ENCODE measurements at regions of chr5 and their contacts with region 1.

Region 1: GRCh38 chr5:107673368-107674136 is 2.8 kb upstream of the EFNA5 start:
- DNase-seq: peak in 1 of 2 donors; percentile 92
- H3K4me3 ChIP-seq: peak overlapping the region; percentile 56 to 78
- H3K27ac ChIP-seq: peak overlapping the region; percentile 82 to 89
- H3K4me1 ChIP-seq: no peaks in the 10 kb centered on the region
- H3K27me3 ChIP-seq: no peaks in the 10 kb centered on the region
- CTCF ChIP-seq: peak; percentile 88 to 96 (median 94)

Region 2: DNA sequence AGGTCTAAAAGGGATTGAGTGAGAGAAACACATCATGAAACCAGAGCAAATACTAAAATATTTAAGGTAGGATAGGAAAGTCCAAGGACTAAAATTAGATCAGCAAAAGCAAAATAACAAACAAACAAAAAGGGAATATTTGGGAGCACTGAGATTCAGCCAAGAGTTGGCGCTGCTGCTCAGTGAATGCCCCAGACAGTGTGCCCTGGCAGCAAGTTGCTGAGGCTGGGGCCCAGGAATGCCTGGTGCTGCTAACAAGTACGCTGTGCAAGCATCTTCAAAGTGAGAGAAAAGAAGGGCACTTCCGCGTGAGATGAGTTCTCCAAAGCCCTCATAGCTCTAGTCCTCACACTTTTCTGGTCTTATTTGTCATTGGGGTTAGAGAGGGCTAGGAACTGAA is 606.2 kb before region 1 on chr5:
- intact Hi-C with region 1: loop called (anchors 5 kb)
- DNase-seq: no peak
- H3K4me3 ChIP-seq: no peak overlapping the region
- H3K27ac ChIP-seq: peak overlapping the region in 1 of 2 donors; percentile 45
- H3K4me1 ChIP-seq: no peaks in the 10 kb centered on the region
- H3K27me3 ChIP-seq: no peaks in the 10 kb centered on the region
- CTCF ChIP-seq: peak in 2 of 3 experiments; percentile 27 to 42

Region 3: GRCh38 chr5:107217721-107218130 is 455.8 kb before region 1 on chr5:
- intact Hi-C with region 1: loop called (anchors 1 kb)
- DNase-seq: peak; percentile 70 to 92
- H3K4me3 ChIP-seq: no peak overlapping the region
- H3K27ac ChIP-seq: peak overlapping the region; percentile 76 to 86
- H3K4me1 ChIP-seq: peaks cover 0 to 9% of the 10 kb centered on the region in 2 donors
- H3K27me3 ChIP-seq: no peaks in the 10 kb centered on the region
- CTCF ChIP-seq: no peak

Region 4: DNA sequence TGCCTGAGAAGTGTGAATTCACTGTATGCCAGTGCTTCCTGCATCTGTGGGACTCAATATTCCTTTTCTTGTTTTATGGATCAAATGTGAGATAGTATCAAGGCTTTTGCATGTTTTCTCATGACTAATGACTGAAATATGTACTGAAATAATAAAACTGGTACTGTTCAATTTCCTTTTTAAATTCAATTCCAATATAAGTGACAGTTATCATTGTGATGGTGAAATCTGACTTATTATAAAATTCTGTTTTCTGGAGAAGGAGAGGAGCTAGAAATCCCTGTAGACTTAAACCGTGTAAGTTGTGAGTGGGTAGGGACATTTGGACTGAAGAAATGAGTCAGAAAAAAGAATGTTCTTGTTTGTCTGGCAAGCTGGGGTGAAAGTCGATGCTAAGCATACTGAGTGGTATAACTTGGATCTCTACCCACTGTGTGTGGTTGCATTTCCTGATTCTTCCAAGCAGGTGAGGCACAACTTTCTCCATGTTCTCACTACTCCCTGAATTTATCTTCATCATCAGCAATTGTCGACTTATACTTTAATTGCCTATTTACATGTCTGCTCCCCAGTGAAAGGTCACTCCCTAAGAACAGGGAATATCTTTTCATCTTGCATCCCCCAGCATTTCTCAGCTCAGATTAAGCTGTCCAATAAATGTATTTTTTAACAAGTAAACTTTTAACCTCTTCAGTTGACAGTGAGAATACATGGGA is 247.9 kb before region 1 on chr5:
- intact Hi-C with region 1: loop called (anchors 5 kb)
- DNase-seq: no peak
- H3K4me3 ChIP-seq: no peak overlapping the region
- H3K27ac ChIP-seq: peak overlapping the region; percentile 46 to 58
- H3K4me1 ChIP-seq: peaks cover 2 to 30% of the 10 kb centered on the region in 2 donors
- H3K27me3 ChIP-seq: no peaks in the 10 kb centered on the region
- CTCF ChIP-seq: no peak

Region 5: DNA sequence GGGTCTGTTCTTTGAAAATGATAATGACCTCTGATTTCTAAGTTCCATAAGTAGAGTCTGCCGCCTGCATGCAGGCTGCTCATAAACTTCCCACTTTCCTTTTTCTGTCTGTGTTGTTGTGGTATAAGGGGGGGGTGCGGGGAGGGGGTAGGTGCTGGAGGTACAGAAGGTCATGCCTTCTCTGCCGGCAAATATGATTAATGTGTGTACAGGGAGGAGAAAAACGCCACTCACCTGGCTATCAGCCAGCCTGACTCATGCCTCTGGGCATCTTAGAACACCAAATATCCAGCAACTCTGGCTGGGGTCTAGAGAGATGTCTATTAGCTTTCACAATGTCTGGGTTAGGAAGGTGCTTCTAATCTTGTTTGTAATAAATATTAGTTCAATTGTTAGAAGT is 131.1 kb before region 1 on chr5:
- intact Hi-C with region 1: loop called (anchors 1 kb)
- DNase-seq: peak; percentile 47 to 95
- H3K4me3 ChIP-seq: peak overlapping the region; percentile 3 to 49
- H3K27ac ChIP-seq: peak overlapping the region; percentile 54 to 62
- H3K4me1 ChIP-seq: peaks cover 0 to 24% of the 10 kb centered on the region in 2 donors
- H3K27me3 ChIP-seq: no peaks in the 10 kb centered on the region
- CTCF ChIP-seq: no peak

Region 6: DNA sequence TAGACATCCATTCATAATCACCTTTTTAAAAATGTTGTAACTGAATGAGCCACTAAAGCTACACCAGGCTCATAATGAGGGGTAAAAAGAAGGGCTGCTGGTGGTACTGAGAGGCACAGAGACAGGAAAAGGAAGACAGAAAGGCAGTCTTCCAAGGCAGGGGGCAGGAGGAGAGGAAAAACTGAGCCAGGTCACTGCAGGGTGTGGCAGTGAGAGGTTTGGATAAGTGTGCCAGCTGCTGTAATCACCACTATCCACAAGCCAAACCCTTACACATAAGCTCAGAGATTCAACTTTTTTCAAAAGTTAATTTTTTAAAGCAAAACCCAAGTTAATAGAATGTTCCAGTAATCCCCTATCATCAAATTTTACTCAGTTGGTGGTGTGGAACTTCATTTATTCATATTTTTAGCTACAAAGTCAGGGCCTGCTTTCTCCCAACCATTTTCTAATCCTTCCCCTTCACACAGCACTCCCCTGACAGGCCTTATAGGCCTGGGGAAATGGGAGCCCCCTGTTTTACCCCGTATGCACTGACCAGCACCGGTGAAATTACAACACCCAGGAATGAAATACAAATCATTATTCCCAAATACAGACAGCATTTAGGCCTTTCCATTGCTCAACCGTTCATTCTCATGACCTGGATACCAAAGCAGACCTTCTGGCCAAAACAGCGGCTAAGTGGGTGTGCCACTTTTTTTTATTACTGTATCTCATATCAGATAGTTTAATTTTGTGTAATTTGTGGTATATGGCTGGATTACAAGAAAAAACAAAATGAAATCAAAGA is 79.1 kb before region 1 on chr5:
- intact Hi-C with region 1: loop called (anchors 5 kb)
- DNase-seq: no peak
- H3K4me3 ChIP-seq: no peak overlapping the region
- H3K27ac ChIP-seq: peak overlapping the region; percentile 50 to 73
- H3K4me1 ChIP-seq: peaks cover 0 to 7% of the 10 kb centered on the region in 2 donors
- H3K27me3 ChIP-seq: no peaks in the 10 kb centered on the region
- CTCF ChIP-seq: no peak

Region 7: DNA sequence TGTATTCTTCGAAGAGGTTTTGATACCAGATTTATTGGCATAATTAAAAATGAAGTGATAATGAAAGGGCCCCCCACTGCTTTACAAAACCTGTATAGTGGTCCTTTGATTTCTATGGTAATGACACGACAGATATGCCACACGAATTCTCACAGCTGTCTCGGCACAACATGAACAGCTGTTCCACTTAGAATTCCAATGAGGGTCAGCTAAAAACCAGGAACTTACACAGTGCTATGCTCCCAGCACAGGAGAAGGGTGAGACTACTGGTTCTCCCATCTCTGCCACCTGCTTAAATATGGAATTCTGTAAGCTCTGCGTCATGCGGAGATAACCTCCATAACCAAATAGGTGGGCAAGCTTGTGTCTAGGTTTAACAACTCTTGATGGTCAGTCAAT is 180.1 kb after region 1 on chr5:
- intact Hi-C with region 1: no loop called
- DNase-seq: no peak
- H3K4me3 ChIP-seq: no peak overlapping the region
- H3K27ac ChIP-seq: no peak overlapping the region
- H3K4me1 ChIP-seq: no peaks in the 10 kb centered on the region
- H3K27me3 ChIP-seq: no peaks in the 10 kb centered on the region
- CTCF ChIP-seq: no peak

Region 8: GRCh38 chr5:107917983-107918382 is 244.4 kb after region 1 on chr5:
- intact Hi-C with region 1: no loop called
- DNase-seq: no peak
- H3K4me3 ChIP-seq: no peak overlapping the region
- H3K27ac ChIP-seq: no peak overlapping the region
- H3K4me1 ChIP-seq: no peaks in the 10 kb centered on the region
- H3K27me3 ChIP-seq: no peaks in the 10 kb centered on the region
- CTCF ChIP-seq: no peak